Activated CD8-positive, alpha-beta T cell treated with anti-CD3 and anti-CD28 coated beads for 36 hours (primary cell): ENCODE measurements at regions of chr2 and their contacts with region 1.

Region 1: DNA sequence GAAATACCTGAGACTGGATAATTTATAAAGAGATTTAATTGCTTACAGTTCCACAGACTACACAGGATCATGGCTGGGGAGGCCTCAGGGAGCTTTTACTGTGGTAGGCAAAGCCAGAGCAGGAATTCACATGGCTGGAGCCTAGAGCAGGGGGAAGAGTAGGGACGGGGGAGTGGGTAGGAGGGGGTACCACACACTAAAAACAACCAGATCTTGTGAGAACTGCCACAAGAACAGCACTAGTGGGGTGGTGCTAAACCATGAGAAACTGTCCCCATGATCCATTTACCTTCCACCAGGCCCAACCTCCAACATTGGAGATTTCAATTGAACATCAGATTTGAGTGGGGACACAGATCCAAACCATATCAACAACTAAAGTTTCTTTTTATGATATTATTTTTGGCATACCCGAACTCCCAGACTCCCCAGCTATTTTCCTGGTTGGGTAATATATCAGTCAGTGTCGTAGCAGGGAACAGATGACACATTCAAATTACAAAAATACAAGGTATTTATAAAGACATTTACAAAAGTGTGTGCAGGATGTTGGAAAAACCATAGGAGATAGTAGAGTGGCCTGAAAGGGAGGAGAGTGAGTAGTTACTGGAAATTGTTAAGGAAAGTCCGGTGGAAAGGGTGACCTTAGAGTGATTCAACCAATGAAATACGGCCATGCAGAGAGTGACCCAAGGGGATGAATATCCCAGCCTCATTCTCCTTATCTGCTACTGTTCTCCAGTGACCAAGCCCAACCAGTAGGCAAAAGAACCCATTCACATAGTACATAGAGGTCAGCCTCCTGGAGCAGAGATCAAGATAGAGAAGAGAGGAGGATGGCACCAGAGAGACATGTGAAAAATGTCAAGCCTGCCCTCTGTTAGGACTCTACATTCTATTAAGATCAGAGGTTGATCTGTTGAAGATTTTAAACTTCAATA is 8.8 kb downstream of the RPL37A start:
- DNase-seq: no peak
- ATAC-seq: no peak
- H3K4me3 Mint-ChIP-seq: no peak overlapping the region
- H3K27ac Mint-ChIP-seq: peak overlapping the region; percentile 4
- H3K4me1 Mint-ChIP-seq: peaks cover 22% of the 10 kb centered on the region
- H3K27me3 Mint-ChIP-seq: no peaks in the 10 kb centered on the region
- CTCF ChIP-seq: no peak

Region 2: DNA sequence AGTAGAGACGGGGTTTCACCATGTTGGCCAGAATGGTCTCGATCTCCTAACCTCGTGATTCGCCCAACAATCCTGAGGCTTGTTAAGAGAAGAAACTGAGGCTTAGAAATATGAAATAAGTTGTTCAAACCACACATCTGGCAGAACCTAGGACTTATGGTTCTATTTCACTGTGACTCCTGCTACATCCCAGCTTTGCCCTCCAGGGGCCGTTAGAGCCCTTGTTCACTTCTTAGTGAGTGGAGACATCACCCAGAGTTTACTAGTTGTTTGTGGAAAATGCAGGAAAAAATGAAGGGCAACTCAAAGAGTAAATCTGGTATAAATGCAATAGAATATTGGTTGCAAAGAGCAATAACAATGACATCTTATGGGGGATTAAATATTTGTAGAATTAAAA is 179.1 kb before region 1 on chr2:
- CTCF ChIA-PET with region 1: no interaction called
- POLR2A ChIA-PET with region 1: no interaction called
- intact Hi-C with region 1: no loop called
- DNase-seq: no peak
- ATAC-seq: no peak
- H3K4me3 Mint-ChIP-seq: no peak overlapping the region
- H3K27ac Mint-ChIP-seq: no peak overlapping the region
- H3K4me1 Mint-ChIP-seq: no peaks in the 10 kb centered on the region
- H3K27me3 Mint-ChIP-seq: no peaks in the 10 kb centered on the region
- CTCF ChIP-seq: no peak

Region 3: DNA sequence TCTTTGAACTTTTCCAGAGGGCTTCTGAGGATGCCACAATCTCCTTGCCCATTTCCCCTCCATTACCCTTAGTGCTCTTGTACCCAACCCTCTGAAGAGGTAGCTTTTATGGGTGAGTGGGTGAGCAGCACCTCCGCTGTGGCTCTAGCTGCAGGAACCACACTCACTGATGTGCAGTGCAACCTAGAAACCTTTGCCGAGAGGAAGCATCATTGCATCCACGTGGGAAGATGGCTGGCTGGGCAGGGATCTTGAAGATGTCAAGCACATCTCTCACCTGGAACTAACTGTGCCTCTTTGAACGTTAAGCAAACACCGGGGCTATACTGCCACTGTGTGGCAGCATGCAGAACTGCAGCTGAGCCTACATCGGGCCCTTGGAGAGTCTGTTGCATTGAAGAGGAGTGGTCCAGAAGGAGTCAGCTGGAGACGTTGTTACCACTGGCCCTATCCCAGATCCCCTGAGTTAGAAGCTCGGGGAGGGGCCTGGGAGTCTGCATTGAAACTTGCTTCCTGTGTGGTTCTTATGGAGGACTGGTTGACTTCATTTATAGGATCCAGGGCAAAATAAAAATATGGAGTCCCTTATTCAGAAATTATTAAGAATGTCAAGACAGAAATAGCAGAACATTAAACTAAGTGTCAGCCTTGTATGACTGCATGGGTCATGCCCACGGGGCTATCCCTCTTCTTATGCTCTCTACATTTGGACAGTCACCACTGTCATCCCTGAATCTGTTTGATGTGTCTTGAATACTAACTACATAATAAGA is 159.2 kb after region 1 on chr2:
- CTCF ChIA-PET with region 1: interaction called, 14 read pairs
- POLR2A ChIA-PET with region 1: interaction called, 3 read pairs
- intact Hi-C with region 1: no loop called
- DNase-seq: peak; percentile 76
- ATAC-seq: peak; percentile 92
- H3K4me3 Mint-ChIP-seq: no peak overlapping the region
- H3K27ac Mint-ChIP-seq: no peak overlapping the region
- H3K4me1 Mint-ChIP-seq: no peaks in the 10 kb centered on the region
- H3K27me3 Mint-ChIP-seq: no peaks in the 10 kb centered on the region
- CTCF ChIP-seq: peak; percentile 97